CD14-positive monocyte (primary cell): ENCODE measurements at regions of chr6 and their contacts with region 1.

Region 1: GRCh38 chr6:36765594-36766398 is 68.2 kb downstream of the RAB44 start:
- DNase-seq: peak; percentile 78 to 82 (median 79)
- H3K4me3 ChIP-seq: no peak overlapping the region
- H3K4me3 Mint-ChIP-seq: no peak overlapping the region
- H3K27ac ChIP-seq: no peak overlapping the region
- H3K27ac Mint-ChIP-seq: no peak overlapping the region
- H3K4me1 ChIP-seq: peaks cover 19 to 27% of the 10 kb centered on the region in 2 donors
- H3K4me1 Mint-ChIP-seq: peaks cover 26% of the 10 kb centered on the region
- H3K27me3 ChIP-seq: no peaks in the 10 kb centered on the region
- H3K27me3 Mint-ChIP-seq: peaks cover 0 to 7% (median 2%) of the 10 kb centered on the region in 3 donors
- CTCF ChIP-seq: peak; percentile 95

Region 2: GRCh38 chr6:34964564-34964963 is 1801.2 kb before region 1 on chr6:
- intact Hi-C with region 1: no loop called
- DNase-seq: no peak
- H3K4me3 ChIP-seq: no peak overlapping the region
- H3K4me3 Mint-ChIP-seq: no peak overlapping the region
- H3K27ac ChIP-seq: no peak overlapping the region
- H3K27ac Mint-ChIP-seq: no peak overlapping the region
- H3K4me1 ChIP-seq: no peaks in the 10 kb centered on the region
- H3K4me1 Mint-ChIP-seq: peaks cover 11% of the 10 kb centered on the region
- H3K27me3 ChIP-seq: no peaks in the 10 kb centered on the region
- H3K27me3 Mint-ChIP-seq: no peaks in the 10 kb centered on the region
- CTCF ChIP-seq: no peak

Region 3: GRCh38 chr6:36839749-36840431 is 74.1 kb after region 1 on chr6:
- intact Hi-C with region 1: loop called (anchors 5 kb)
- DNase-seq: peak in 1 of 3 donors; percentile 8
- H3K4me3 ChIP-seq: peak overlapping the region in 2 of 3 experiments; percentile 13 to 68
- H3K4me3 Mint-ChIP-seq: peak overlapping the region; percentile 77 to 92
- H3K27ac ChIP-seq: no peak overlapping the region
- H3K27ac Mint-ChIP-seq: peak overlapping the region in 2 of 7 donors; percentile 57 to 58
- H3K4me1 ChIP-seq: peaks cover 26 to 34% of the 10 kb centered on the region in 2 donors
- H3K4me1 Mint-ChIP-seq: peaks cover 35% of the 10 kb centered on the region
- H3K27me3 ChIP-seq: peaks cover 29 to 46% of the 10 kb centered on the region in 2 donors
- H3K27me3 Mint-ChIP-seq: peaks cover 43 to 53% (median 50%) of the 10 kb centered on the region in 3 donors
- CTCF ChIP-seq: no peak

Region 4: DNA sequence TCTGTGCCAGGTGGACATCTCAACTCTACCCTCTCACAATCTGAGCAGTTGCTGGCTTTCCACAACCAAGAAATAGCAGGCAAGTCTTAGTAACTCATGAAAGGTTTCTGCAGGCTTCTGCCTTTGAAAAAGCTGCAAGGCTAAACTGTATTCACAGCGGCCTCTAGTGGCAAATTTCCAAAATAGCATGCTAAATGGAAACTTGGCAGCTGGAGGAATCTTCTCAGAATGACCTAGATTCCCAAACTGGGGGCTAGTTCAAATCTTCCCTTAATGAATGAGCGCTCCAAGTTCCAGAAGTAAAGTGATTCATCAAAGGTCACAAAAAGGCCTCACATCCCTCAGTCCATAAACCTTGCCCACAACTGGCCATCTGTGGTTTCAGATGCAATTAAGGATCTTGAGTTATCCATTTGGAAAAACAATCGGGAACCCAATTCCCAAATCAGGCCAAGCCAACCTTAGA is 85.4 kb after region 1 on chr6:
- intact Hi-C with region 1: loop called in 1 of 2 experiments (anchors 5 kb)
- DNase-seq: peak; percentile 41 to 69 (median 58)
- H3K4me3 ChIP-seq: no peak overlapping the region
- H3K4me3 Mint-ChIP-seq: peak overlapping the region in 1 of 2 donors; percentile 30
- H3K27ac ChIP-seq: no peak overlapping the region
- H3K27ac Mint-ChIP-seq: peak overlapping the region in 1 of 7 donors; percentile 94
- H3K4me1 ChIP-seq: peaks cover 49 to 55% of the 10 kb centered on the region in 2 donors
- H3K4me1 Mint-ChIP-seq: peaks cover 59% of the 10 kb centered on the region
- H3K27me3 ChIP-seq: no peaks in the 10 kb centered on the region
- H3K27me3 Mint-ChIP-seq: peaks cover 3 to 9% (median 6%) of the 10 kb centered on the region in 3 donors
- CTCF ChIP-seq: peak; percentile 84

Region 5: GRCh38 chr6:36862164-36862847 is 96.5 kb after region 1 on chr6:
- intact Hi-C with region 1: loop called in 1 of 2 experiments (anchors 10 kb)
- DNase-seq: no peak
- H3K4me3 ChIP-seq: no peak overlapping the region
- H3K4me3 Mint-ChIP-seq: no peak overlapping the region
- H3K27ac ChIP-seq: no peak overlapping the region
- H3K27ac Mint-ChIP-seq: no peak overlapping the region
- H3K4me1 ChIP-seq: no peaks in the 10 kb centered on the region
- H3K4me1 Mint-ChIP-seq: no peaks in the 10 kb centered on the region
- H3K27me3 ChIP-seq: no peaks in the 10 kb centered on the region
- H3K27me3 Mint-ChIP-seq: no peaks in the 10 kb centered on the region
- CTCF ChIP-seq: no peak

Region 6: DNA sequence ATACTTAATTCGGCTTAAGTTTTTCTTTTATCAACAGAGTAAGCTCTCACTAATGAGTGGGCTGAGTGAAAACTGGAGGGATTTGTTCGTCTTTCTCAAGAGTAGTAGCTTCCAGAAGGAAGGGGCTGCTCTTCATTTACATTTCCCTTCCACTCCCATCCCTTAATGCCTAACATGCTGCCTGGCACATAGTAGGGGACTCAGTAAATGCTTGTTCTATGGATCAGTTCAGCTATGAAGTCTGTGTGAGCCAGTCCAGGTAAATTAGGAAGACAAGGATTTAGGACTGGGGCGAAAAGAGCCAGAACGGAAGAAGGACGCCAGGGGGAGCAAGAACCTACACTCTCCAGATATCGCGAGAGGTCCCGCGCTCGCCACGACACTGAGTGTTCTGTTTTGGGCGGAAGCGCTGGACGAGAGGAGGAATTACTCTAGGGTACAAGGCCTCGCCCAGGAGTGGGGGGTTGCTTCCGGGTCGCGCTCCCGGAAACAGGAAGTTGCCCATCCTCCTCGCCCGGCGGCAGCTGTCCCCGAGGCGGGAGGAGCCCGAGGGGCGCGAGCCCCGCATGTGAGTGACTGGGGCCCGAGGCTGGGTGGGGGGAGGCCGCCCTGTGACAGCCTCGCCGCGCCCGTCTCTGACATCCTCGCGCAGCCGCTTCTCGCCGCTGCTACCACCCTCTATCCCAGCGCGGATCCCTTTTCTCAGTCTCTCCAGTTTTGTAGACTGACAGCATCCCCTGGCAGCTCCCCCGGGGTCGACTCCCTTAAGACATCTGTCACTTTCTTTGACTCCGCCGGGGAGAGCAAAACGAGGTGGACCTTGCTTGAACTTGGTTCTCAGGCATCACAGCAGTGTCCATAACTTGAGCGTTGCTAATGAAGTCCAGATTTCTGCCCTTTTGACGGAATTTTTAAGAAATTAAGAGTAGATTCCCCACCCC is 119.9 kb after region 1 on chr6 and contains the start of gene C6orf89:
- intact Hi-C with region 1: loop called in 1 of 2 experiments (anchors 10 kb)
- DNase-seq: peak; percentile 98 to 99 (median 99)
- H3K4me3 ChIP-seq: peak within 1 kb of the TSS; percentile 85 to 94 (median 87)
- H3K4me3 Mint-ChIP-seq: peak within 1 kb of the TSS; percentile 89 to 93
- H3K27ac ChIP-seq: peak within 1 kb of the TSS; percentile 53 to 91
- H3K27ac Mint-ChIP-seq: peak within 1 kb of the TSS; percentile 85 to 97 (median 92)
- H3K4me1 ChIP-seq: peaks cover 15 to 17% of the 10 kb centered on the region in 2 donors
- H3K4me1 Mint-ChIP-seq: peaks cover 25% of the 10 kb centered on the region
- H3K27me3 ChIP-seq: no peaks in the 10 kb centered on the region
- H3K27me3 Mint-ChIP-seq: no peaks in the 10 kb centered on the region
- CTCF ChIP-seq: peak; percentile 84
- polyA plus RNA-seq, gene C6orf89: 19.2 to 37.5 (median 29.2) TPM

Region 7: GRCh38 chr6:37207903-37208456 is 442.2 kb after region 1 on chr6:
- intact Hi-C with region 1: loop called (anchors 2 to 5 kb)
- DNase-seq: peak; percentile 79 to 83 (median 81)
- H3K4me3 ChIP-seq: no peak overlapping the region
- H3K4me3 Mint-ChIP-seq: peak overlapping the region; percentile 39 to 61
- H3K27ac ChIP-seq: no peak overlapping the region
- H3K27ac Mint-ChIP-seq: peak overlapping the region in 5 of 7 donors; percentile 19 to 77 (median 58)
- H3K4me1 ChIP-seq: peaks cover 22 to 24% of the 10 kb centered on the region in 2 donors
- H3K4me1 Mint-ChIP-seq: peaks cover 38% of the 10 kb centered on the region
- H3K27me3 ChIP-seq: no peaks in the 10 kb centered on the region
- H3K27me3 Mint-ChIP-seq: peaks cover 0 to 5% (median 0%) of the 10 kb centered on the region in 3 donors
- CTCF ChIP-seq: peak; percentile 93